K562 (cell line): ENCODE measurements at regions of chr6 and their contacts with region 1.

Region 1: GRCh38 chr6:25601800-25602673 is 50.0 kb upstream of the SCGN start:
- DNase-seq: peak; percentile 35 to 62 (median 40)
- ATAC-seq: peak; percentile 63
- H3K4me3 ChIP-seq: no peak overlapping the region
- H3K27ac ChIP-seq: no peak overlapping the region
- H3K4me1 ChIP-seq: no peaks in the 10 kb centered on the region
- H3K27me3 ChIP-seq: peaks cover 9 to 10% of the 10 kb centered on the region in 2 experiments
- CTCF ChIP-seq: peak in 2 of 3 experiments; percentile 40 to 84; a peak in 4 of 6 replicates
- EP300 ChIP-seq: no peak
- POLR2A ChIP-seq: no peak
- RAD21 ChIP-seq: peak; percentile 87 to 90

Region 2: GRCh38 chr6:24855395-24856245 is 746.4 kb before region 1 on chr6:
- CTCF ChIA-PET with region 1: interaction called, 3 read pairs
- POLR2A ChIA-PET with region 1: no interaction called
- in situ Hi-C with region 1: no loop called
- intact Hi-C with region 1: loop called (anchors 10 kb)
- DNase-seq: peak; percentile 79 to 83 (median 80)
- ATAC-seq: peak; percentile 94
- H3K4me3 ChIP-seq: no peak overlapping the region
- H3K27ac ChIP-seq: no peak overlapping the region
- H3K4me1 ChIP-seq: no peaks in the 10 kb centered on the region
- H3K27me3 ChIP-seq: peaks cover 13 to 24% of the 10 kb centered on the region in 2 experiments
- CTCF ChIP-seq: peak; percentile 84 to 93 (median 86)
- EP300 ChIP-seq: no peak
- POLR2A ChIP-seq: no peak
- RAD21 ChIP-seq: peak; percentile 89

Region 3: DNA sequence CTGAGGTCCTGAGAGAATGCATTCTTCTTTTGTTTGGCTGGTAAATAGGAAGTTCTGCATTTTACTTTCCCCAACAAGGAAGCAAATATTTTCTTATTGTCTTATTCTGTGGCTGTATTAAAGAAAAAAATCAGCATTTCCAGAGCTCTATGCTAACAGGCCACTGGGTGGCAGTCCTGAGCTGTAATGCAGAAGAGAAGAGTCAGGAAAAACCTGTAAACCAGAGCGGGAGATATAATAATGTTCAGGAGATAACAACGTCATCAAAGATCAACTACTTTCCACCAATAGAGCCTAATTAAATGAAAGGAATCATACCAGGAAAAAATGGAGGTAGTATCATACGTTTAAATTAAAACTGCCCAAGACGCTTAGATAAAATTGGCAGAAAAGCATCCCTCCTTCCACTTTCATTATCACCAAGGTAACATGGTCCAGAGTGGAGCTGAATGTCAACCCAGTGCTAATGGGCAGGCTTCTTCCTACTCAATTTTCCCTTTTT is 378.5 kb before region 1 on chr6:
- CTCF ChIA-PET with region 1: interaction called, 19 read pairs
- POLR2A ChIA-PET with region 1: interaction called, 3 read pairs
- in situ Hi-C with region 1: loop called (anchors 10 kb)
- intact Hi-C with region 1: loop called (anchors 1 kb)
- DNase-seq: peak; percentile 57 to 73 (median 59)
- ATAC-seq: peak; percentile 87
- H3K4me3 ChIP-seq: no peak overlapping the region
- H3K27ac ChIP-seq: no peak overlapping the region
- H3K4me1 ChIP-seq: peaks cover 0 to under 1% of the 10 kb centered on the region in 2 experiments; a peak in 1 of 5 replicates
- H3K27me3 ChIP-seq: peaks cover 0 to 5% of the 10 kb centered on the region in 2 experiments; a peak in 2 of 5 replicates
- CTCF ChIP-seq: peak; percentile 82 to 92 (median 84)
- EP300 ChIP-seq: no peak
- POLR2A ChIP-seq: no peak
- RAD21 ChIP-seq: peak; percentile 80 to 87

Region 4: GRCh38 chr6:25278914-25279747 is 322.9 kb before region 1 on chr6 and contains the start of gene CARMIL1:
- CTCF ChIA-PET with region 1: interaction called, 3 read pairs
- POLR2A ChIA-PET with region 1: no interaction called
- in situ Hi-C with region 1: loop called (anchors 10 kb)
- intact Hi-C with region 1: no loop called
- DNase-seq: peak; percentile 80 to 92 (median 90)
- ATAC-seq: peak; percentile 97
- H3K4me3 ChIP-seq: peak within 1 kb of the TSS; percentile 60
- H3K27ac ChIP-seq: no peak within 1 kb of the TSS
- H3K4me1 ChIP-seq: peaks cover 2 to 17% of the 10 kb centered on the region in 2 experiments; a peak in 2 of 5 replicates
- H3K27me3 ChIP-seq: peaks cover 4 to 26% of the 10 kb centered on the region in 2 experiments; a peak in 4 of 5 replicates
- CTCF ChIP-seq: peak; percentile 70 to 85 (median 70)
- EP300 ChIP-seq: no peak
- POLR2A ChIP-seq: no peak
- RAD21 ChIP-seq: peak; percentile 78
- polyA plus RNA-seq, gene CARMIL1: 0.08 TPM in 1 of 2 experiments, not detected in the other

Region 5: GRCh38 chr6:25579902-25580495 is 22.0 kb before region 1 on chr6:
- CTCF ChIA-PET with region 1: no interaction called
- POLR2A ChIA-PET with region 1: no interaction called
- in situ Hi-C with region 1: no loop called
- intact Hi-C with region 1: no loop called
- DNase-seq: no peak
- ATAC-seq: no peak
- H3K4me3 ChIP-seq: no peak overlapping the region
- H3K27ac ChIP-seq: no peak overlapping the region
- H3K4me1 ChIP-seq: no peaks in the 10 kb centered on the region
- H3K27me3 ChIP-seq: peaks cover 0 to 4% of the 10 kb centered on the region in 2 experiments; a peak in 3 of 5 replicates
- CTCF ChIP-seq: no peak
- EP300 ChIP-seq: no peak
- POLR2A ChIP-seq: no peak
- RAD21 ChIP-seq: no peak

Region 6: GRCh38 chr6:25889877-25890853 is 288.1 kb after region 1 on chr6:
- CTCF ChIA-PET with region 1: no interaction called
- POLR2A ChIA-PET with region 1: no interaction called
- in situ Hi-C with region 1: no loop called
- intact Hi-C with region 1: loop called (anchors 5 kb)
- DNase-seq: peak; percentile 16 to 56 (median 22)
- ATAC-seq: peak; percentile 87
- H3K4me3 ChIP-seq: no peak overlapping the region
- H3K27ac ChIP-seq: no peak overlapping the region
- H3K4me1 ChIP-seq: no peaks in the 10 kb centered on the region
- H3K27me3 ChIP-seq: no peaks in the 10 kb centered on the region
- CTCF ChIP-seq: peak; percentile 55 to 83 (median 64)
- EP300 ChIP-seq: no peak
- POLR2A ChIP-seq: no peak
- RAD21 ChIP-seq: peak; percentile 95 to 96